PC-9 (cell line): ENCODE measurements at regions of chr19 and their contacts with region 1.

Region 1: GRCh38 chr19:9934132-9934950 is 2.0 kb downstream of the OLFM2 start:
- DNase-seq: peak; percentile 50 to 74
- H3K4me3 ChIP-seq: no peak overlapping the region
- H3K27ac ChIP-seq: no peak overlapping the region
- H3K4me1 ChIP-seq: no peaks in the 10 kb centered on the region
- H3K27me3 ChIP-seq: peaks cover 13% of the 10 kb centered on the region; the same call in 1 of the 2 replicates
- CTCF ChIP-seq: peak; percentile 99

Region 2: DNA sequence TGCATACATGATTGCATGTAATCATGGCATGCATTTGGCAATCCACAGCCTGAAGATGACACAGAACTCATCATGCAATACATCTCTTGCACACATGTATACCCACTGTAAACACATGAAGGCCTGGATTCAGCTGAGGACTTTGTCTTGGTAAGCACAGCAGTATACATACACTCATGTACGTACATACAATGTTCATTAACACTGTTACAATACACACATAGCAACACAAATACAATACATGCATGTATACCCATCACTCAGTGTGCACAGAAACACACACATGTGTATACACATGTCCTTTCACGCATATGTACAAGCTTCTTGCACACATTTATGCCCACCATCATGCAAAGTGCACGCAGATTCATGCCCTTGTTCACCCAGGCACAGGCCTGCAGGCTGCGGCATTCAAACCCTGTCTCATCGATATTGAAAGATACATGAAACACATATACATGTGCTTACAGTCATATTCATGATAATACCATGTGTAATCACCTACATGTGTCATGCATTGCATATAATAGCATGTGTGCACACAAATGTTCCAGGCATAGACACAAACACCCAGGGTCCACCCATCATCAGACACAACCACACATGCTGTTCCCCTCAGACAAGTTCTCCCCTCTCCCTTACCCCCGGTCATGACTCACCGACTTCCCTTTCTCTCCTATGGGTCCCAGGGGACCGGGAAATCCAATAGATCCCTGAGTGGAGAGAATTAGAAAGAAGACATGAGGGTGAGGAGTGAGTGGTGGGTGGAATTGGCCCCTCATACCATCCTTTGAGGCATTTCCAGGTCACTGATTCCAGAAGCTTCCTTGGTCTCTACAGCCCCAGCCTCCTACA is 47.3 kb after region 1 on chr19:
- CTCF ChIA-PET with region 1: no interaction called
- POLR2A ChIA-PET with region 1: no interaction called
- intact Hi-C with region 1: no loop called
- DNase-seq: no peak
- H3K4me3 ChIP-seq: no peak overlapping the region
- H3K27ac ChIP-seq: no peak overlapping the region
- H3K4me1 ChIP-seq: no peaks in the 10 kb centered on the region
- H3K27me3 ChIP-seq: peaks cover 86% of the 10 kb centered on the region
- CTCF ChIP-seq: no peak

Region 3: GRCh38 chr19:10000171-10000826 is 66.0 kb after region 1 on chr19:
- CTCF ChIA-PET with region 1: interaction called, 4 read pairs
- POLR2A ChIA-PET with region 1: no interaction called
- intact Hi-C with region 1: loop called (anchors 1 kb)
- DNase-seq: peak; percentile 60 to 64
- H3K4me3 ChIP-seq: no peak overlapping the region
- H3K27ac ChIP-seq: no peak overlapping the region
- H3K4me1 ChIP-seq: no peaks in the 10 kb centered on the region
- H3K27me3 ChIP-seq: peaks cover 77% of the 10 kb centered on the region
- CTCF ChIP-seq: peak; percentile 92

Region 4: GRCh38 chr19:10095948-10096621 is 161.7 kb after region 1 on chr19:
- CTCF ChIA-PET with region 1: interaction called, 15 read pairs
- POLR2A ChIA-PET with region 1: no interaction called
- intact Hi-C with region 1: loop called (anchors 10 kb)
- DNase-seq: peak; percentile 77 to 95
- H3K4me3 ChIP-seq: peak overlapping the region; percentile 56
- H3K27ac ChIP-seq: no peak overlapping the region
- H3K4me1 ChIP-seq: peaks cover 11% of the 10 kb centered on the region
- H3K27me3 ChIP-seq: no peaks in the 10 kb centered on the region
- CTCF ChIP-seq: no peak

Region 5: DNA sequence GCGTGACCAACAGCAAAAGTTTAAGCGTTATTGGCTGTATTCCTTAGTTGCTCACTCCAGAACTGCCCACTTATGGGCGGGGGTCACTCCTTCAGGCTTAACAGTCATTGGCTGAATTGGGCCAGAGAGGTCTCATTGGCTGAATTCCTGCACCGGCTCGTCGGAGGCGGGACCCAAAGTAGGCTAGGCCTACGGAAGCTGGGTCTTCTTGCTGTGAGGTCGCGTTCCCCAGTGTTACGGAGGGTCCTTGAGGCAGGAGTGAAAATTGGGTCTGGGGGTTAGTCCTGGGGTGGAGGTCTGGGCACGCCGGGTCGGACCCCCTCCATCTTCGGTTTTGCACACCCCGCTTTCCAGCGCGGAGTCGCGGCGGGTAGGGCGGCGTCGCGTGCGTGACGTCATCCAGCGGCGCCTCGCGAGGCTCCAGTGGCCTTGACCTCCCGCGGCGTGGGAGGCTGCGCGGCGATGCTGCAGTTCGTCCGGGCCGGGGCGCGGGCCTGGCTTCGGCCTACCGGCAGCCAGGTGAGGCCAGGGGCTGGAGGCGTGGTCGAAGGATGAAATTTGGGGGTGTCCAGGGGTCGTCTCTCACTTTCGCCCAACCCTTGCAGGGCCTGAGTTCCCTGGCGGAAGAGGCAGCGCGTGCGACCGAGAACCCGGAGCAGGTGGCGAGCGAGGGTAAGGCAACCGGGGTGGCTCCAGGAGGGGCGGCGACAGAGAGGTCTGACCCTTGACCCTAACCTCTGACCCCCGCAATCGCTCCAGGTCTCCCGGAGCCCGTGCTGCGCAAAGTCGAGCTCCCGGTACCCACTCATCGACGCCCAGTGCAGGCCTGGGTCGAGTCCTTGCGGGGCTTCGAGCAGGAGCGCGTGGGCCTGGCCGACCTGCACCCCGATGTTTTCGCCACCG is 317.7 kb after region 1 on chr19 and contains the start of gene MRPL4:
- CTCF ChIA-PET with region 1: interaction called, 9 read pairs
- POLR2A ChIA-PET with region 1: no interaction called
- intact Hi-C with region 1: loop called (anchors 1 kb)
- DNase-seq: peak; percentile 94 to 99
- H3K4me3 ChIP-seq: peak within 1 kb of the TSS; percentile 94
- H3K27ac ChIP-seq: peak within 1 kb of the TSS; percentile 43
- H3K4me1 ChIP-seq: peaks cover 4% of the 10 kb centered on the region; the same call in 1 of the 2 replicates
- H3K27me3 ChIP-seq: no peaks in the 10 kb centered on the region
- CTCF ChIP-seq: no peak
- total RNA-seq, gene MRPL4: 96.4 and 98.2 TPM in 2 replicates

Region 6: DNA sequence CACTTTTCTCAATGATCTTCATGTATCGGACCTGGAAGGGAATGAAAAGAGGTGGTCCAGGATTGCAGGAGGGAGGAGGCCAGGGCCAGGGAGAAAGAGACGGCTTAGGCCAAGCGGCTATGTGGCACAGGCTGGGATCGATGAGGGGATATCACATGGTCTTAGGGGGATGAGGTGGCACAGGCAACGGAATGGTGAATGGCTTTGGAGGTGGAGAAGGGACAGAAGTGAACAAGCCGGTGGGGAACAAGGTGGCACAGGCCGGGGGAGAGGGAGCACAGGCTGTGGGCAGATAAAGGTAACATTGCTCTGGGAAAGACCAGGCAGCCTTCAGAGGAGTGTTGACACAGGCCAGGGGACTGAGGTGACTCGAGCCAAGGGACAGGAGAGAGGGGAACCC is 640.1 kb after region 1 on chr19:
- CTCF ChIA-PET with region 1: no interaction called
- POLR2A ChIA-PET with region 1: no interaction called
- intact Hi-C with region 1: loop called (anchors 10 kb)
- DNase-seq: no peak
- H3K4me3 ChIP-seq: no peak overlapping the region
- H3K27ac ChIP-seq: no peak overlapping the region
- H3K4me1 ChIP-seq: peaks cover 7% of the 10 kb centered on the region
- H3K27me3 ChIP-seq: no peaks in the 10 kb centered on the region
- CTCF ChIP-seq: no peak